ENCODE measurements at regions of chr18 and their contacts with region 1.

Region 1: GRCh38 chr18:75209129-75209950 is at the start of gene PTGR3:
- DNase-seq: peak; percentile 92
- H3K4me3 Mint-ChIP-seq: peak within 1 kb of the TSS; percentile 97
- H3K27ac Mint-ChIP-seq: peak within 1 kb of the TSS; percentile 98
- H3K4me1 Mint-ChIP-seq: peaks cover 51% of the 10 kb centered on the region
- H3K27me3 Mint-ChIP-seq: peaks cover 12% of the 10 kb centered on the region
- total RNA-seq, gene PTGR3: 28.4 to 33.0 TPM

Region 2: DNA sequence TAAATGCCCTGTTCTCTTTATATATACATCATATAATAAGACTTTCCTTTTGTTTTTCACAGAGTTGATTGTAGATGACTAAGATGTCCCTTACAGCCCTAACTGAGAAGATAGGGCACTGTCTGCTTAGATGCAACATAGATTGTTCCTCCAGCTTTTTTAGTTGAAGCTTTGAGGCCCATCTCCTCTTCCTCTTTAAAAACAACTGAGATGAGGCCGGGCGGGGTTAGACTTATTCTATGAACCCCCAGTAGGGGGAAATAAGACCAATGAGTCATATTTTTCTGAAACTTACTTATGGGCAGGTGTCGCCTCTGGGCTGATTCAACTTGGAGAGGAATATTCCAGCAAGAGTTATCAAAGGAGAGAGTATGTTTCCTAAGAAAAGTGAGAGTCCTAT is 1146.3 kb before region 1 on chr18:
- CTCF ChIA-PET with region 1: no interaction called
- intact Hi-C with region 1: loop called (anchors 10 kb)
- DNase-seq: peak; percentile 75
- H3K4me3 Mint-ChIP-seq: peak overlapping the region; percentile 3
- H3K27ac Mint-ChIP-seq: peak overlapping the region; percentile 88
- H3K4me1 Mint-ChIP-seq: peaks cover 40% of the 10 kb centered on the region
- H3K27me3 Mint-ChIP-seq: no peaks in the 10 kb centered on the region

Region 3: DNA sequence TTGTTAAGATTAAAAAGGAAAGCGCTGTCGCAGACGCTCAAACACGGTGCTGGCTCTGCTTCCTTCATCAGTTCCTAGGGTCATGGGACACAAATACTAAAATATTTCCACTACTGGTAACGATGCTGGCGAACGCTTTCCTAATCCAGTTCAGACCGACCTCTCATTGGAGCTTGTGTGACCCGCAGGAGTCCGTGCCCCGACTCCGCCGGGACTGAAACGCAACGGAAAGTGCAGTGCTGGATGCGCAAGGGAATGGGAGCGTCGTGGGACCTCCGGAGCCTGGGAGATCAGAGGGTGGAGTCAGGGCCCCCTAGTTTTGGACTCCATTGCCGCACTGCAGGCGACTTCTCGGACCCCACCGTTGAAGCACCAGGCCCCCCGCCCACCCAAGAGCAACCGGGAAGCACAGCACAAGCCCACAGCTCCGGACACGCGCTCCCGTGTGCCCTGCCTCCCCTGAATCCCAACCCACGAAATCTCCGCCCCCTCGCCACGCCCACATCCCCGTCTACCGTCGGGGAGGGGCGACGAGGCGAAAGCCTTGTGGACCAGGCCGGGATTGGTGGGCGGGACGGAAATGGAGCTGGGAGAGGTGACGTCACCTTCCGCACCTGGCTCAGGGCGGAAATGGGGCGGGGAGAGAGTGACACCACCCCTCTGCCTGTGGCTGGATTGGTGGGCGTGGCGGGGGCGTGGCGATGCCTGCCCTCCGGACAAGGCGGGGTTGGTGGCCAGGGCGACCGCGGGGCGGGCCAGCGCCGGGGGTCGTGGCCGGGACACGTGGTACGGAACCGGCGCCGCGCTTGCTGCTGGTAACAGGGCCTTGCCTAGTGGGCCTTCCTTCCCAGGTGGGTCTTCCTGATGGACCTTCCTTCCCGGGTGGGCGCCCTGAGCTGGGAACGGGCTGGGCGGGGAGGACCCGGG is 713.5 kb before region 1 on chr18 and contains the start of gene CNDP2:
- CTCF ChIA-PET with region 1: no interaction called
- intact Hi-C with region 1: loop called (anchors 1 kb)
- DNase-seq: peak; percentile 100
- H3K4me3 Mint-ChIP-seq: peak within 1 kb of the TSS; percentile 98
- H3K27ac Mint-ChIP-seq: peak within 1 kb of the TSS; percentile 98
- H3K4me1 Mint-ChIP-seq: peaks cover 38% of the 10 kb centered on the region
- H3K27me3 Mint-ChIP-seq: no peaks in the 10 kb centered on the region
- total RNA-seq, gene CNDP2: 101 to 107 TPM

Region 4: DNA sequence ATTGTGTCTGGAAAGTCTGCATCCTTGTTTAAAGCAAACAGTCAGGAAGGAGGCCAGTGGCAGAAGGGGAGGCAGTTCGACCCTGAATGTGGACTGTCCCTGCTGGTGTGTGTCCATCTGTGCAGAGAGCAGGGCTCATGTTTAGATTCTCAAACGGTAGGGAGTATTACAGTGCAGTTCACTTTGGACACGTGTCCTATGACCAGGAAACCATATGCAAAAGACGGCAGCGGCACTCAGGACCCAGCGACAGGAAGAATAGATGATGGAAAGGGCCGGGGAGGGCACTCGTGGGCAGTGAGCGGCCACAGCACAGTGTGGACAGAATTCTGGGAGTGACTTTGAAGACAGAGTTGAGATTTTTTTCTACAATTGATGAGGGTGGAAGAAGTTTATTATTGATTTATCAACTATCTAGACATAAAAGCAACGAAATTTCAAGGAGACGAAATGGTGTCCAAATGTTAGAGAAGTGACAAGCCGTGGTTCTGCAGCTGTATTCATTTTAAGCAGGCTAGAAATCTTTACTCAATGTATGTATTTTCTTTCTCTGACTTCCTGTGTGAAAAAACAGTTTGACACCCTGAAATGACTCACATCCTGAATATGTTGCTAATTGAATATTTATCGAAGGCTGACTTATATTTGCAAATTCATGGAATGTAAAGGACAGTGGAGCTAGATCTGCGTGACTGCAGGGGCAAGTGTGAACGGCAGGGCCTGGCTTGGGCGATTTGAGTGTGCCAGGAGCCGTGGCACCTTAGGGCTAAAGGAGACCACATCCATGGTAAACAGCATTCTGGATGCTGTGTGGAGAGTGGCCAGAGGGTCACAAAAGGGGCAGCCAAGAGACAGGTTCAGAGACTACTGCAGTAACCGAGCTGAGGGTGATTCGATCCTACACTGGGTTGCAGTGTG is 214.6 kb before region 1 on chr18:
- CTCF ChIA-PET with region 1: no interaction called
- intact Hi-C with region 1: loop called (anchors 1 kb)
- DNase-seq: peak; percentile 34
- H3K4me3 Mint-ChIP-seq: peak overlapping the region; percentile 30
- H3K27ac Mint-ChIP-seq: peak overlapping the region; percentile 50
- H3K4me1 Mint-ChIP-seq: peaks cover 41% of the 10 kb centered on the region
- H3K27me3 Mint-ChIP-seq: no peaks in the 10 kb centered on the region

Region 5: GRCh38 chr18:75276818-75277609 is 67.7 kb after region 1 on chr18:
- CTCF ChIA-PET with region 1: no interaction called
- intact Hi-C with region 1: loop called (anchors 2 kb)
- DNase-seq: peak; percentile 26
- H3K4me3 Mint-ChIP-seq: no peak overlapping the region
- H3K27ac Mint-ChIP-seq: no peak overlapping the region
- H3K4me1 Mint-ChIP-seq: peaks cover 47% of the 10 kb centered on the region
- H3K27me3 Mint-ChIP-seq: no peaks in the 10 kb centered on the region

Region 6: GRCh38 chr18:77061946-77062517 is 1852.7 kb after region 1 on chr18:
- CTCF ChIA-PET with region 1: no interaction called
- intact Hi-C with region 1: loop called (anchors 5 kb)
- DNase-seq: peak; percentile 55
- H3K4me3 Mint-ChIP-seq: peak overlapping the region; percentile 11
- H3K27ac Mint-ChIP-seq: peak overlapping the region; percentile 98
- H3K4me1 Mint-ChIP-seq: peaks cover 78% of the 10 kb centered on the region
- H3K27me3 Mint-ChIP-seq: no peaks in the 10 kb centered on the region

Measured in activated naive CD4-positive, alpha-beta T cell treated with anti-CD3 and anti-CD28 coated beads for 36 hours (primary cell).